ENCODE measurements at regions of chr15 and their contacts with region 1.

Region 1: GRCh38 chr15:94163999-94164807 is 67.2 kb upstream of the MCTP2 start:
- DNase-seq: peak; percentile 74
- ATAC-seq: peak; percentile 58
- H3K4me3 ChIP-seq: no peak overlapping the region
- H3K4me3 Mint-ChIP-seq: no peak overlapping the region
- H3K27ac ChIP-seq: no peak overlapping the region
- H3K27ac Mint-ChIP-seq: no peak overlapping the region
- H3K4me1 ChIP-seq: no peaks in the 10 kb centered on the region
- H3K4me1 Mint-ChIP-seq: peaks cover 1% of the 10 kb centered on the region
- H3K27me3 ChIP-seq: peaks cover 0 to 11% (median 0%) of the 10 kb centered on the region in 4 experiments
- H3K27me3 Mint-ChIP-seq: no peaks in the 10 kb centered on the region
- CTCF ChIP-seq: peak; percentile 98

Region 2: GRCh38 chr15:94174399-94174802 is 10.2 kb after region 1 on chr15:
- CTCF ChIA-PET with region 1: interaction called, 23 read pairs
- POLR2A ChIA-PET with region 1: no interaction called
- intact Hi-C with region 1: no loop called
- DNase-seq: peak; percentile 66
- ATAC-seq: peak; percentile 91
- H3K4me3 ChIP-seq: no peak overlapping the region
- H3K4me3 Mint-ChIP-seq: peak overlapping the region; percentile 48
- H3K27ac ChIP-seq: no peak overlapping the region
- H3K27ac Mint-ChIP-seq: peak overlapping the region; percentile 3
- H3K4me1 ChIP-seq: peaks cover 19 to 22% of the 10 kb centered on the region in 2 donors
- H3K4me1 Mint-ChIP-seq: peaks cover 22% of the 10 kb centered on the region
- H3K27me3 ChIP-seq: peaks cover 0 to 14% (median 3%) of the 10 kb centered on the region in 4 experiments
- H3K27me3 Mint-ChIP-seq: peaks cover 43% of the 10 kb centered on the region
- CTCF ChIP-seq: no peak

Region 3: GRCh38 chr15:94230956-94231722 is 66.9 kb after region 1 on chr15 and contains the start of gene MCTP2:
- CTCF ChIA-PET with region 1: interaction called, 63 read pairs
- POLR2A ChIA-PET with region 1: no interaction called
- intact Hi-C with region 1: no loop called
- DNase-seq: peak; percentile 91
- ATAC-seq: peak; percentile 87
- H3K4me3 ChIP-seq: peak within 1 kb of the TSS; percentile 70 to 96 (median 80)
- H3K4me3 Mint-ChIP-seq: peak within 1 kb of the TSS; percentile 95
- H3K27ac ChIP-seq: peak within 1 kb of the TSS; percentile 88 to 90
- H3K27ac Mint-ChIP-seq: peak within 1 kb of the TSS; percentile 93
- H3K4me1 ChIP-seq: peaks cover 53 to 59% of the 10 kb centered on the region in 2 donors
- H3K4me1 Mint-ChIP-seq: peaks cover 68% of the 10 kb centered on the region
- H3K27me3 ChIP-seq: no peaks in the 10 kb centered on the region
- H3K27me3 Mint-ChIP-seq: no peaks in the 10 kb centered on the region
- CTCF ChIP-seq: peak; percentile 24
- total RNA-seq, gene MCTP2: 64.8 and 68.5 TPM in 2 replicates

Region 4: GRCh38 chr15:94287794-94288246 is 123.6 kb after region 1 on chr15:
- CTCF ChIA-PET with region 1: interaction called, 46 read pairs
- POLR2A ChIA-PET with region 1: no interaction called
- intact Hi-C with region 1: no loop called
- DNase-seq: peak; percentile 91
- ATAC-seq: peak; percentile 92
- H3K4me3 ChIP-seq: peak overlapping the region; percentile 2 to 56 (median 28)
- H3K4me3 Mint-ChIP-seq: peak overlapping the region; percentile 84
- H3K27ac ChIP-seq: peak overlapping the region; percentile 90 to 93
- H3K27ac Mint-ChIP-seq: peak overlapping the region; percentile 90
- H3K4me1 ChIP-seq: peaks cover 65 to 72% of the 10 kb centered on the region in 2 donors
- H3K4me1 Mint-ChIP-seq: peaks cover 72% of the 10 kb centered on the region
- H3K27me3 ChIP-seq: no peaks in the 10 kb centered on the region
- H3K27me3 Mint-ChIP-seq: no peaks in the 10 kb centered on the region
- CTCF ChIP-seq: no peak

Region 5: GRCh38 chr15:94317201-94317600 is 153.0 kb after region 1 on chr15:
- CTCF ChIA-PET with region 1: interaction called, 511 read pairs
- POLR2A ChIA-PET with region 1: no interaction called
- intact Hi-C with region 1: no loop called
- DNase-seq: no peak
- ATAC-seq: no peak
- H3K4me3 ChIP-seq: no peak overlapping the region
- H3K4me3 Mint-ChIP-seq: no peak overlapping the region
- H3K27ac ChIP-seq: no peak overlapping the region
- H3K27ac Mint-ChIP-seq: no peak overlapping the region
- H3K4me1 ChIP-seq: no peaks in the 10 kb centered on the region
- H3K4me1 Mint-ChIP-seq: no peaks in the 10 kb centered on the region
- H3K27me3 ChIP-seq: no peaks in the 10 kb centered on the region
- H3K27me3 Mint-ChIP-seq: no peaks in the 10 kb centered on the region
- CTCF ChIP-seq: no peak

Region 6: GRCh38 chr15:94338243-94338846 is 174.1 kb after region 1 on chr15:
- CTCF ChIA-PET with region 1: interaction called, 32 read pairs
- POLR2A ChIA-PET with region 1: no interaction called
- intact Hi-C with region 1: no loop called
- DNase-seq: no peak
- ATAC-seq: no peak
- H3K4me3 ChIP-seq: no peak overlapping the region
- H3K4me3 Mint-ChIP-seq: no peak overlapping the region
- H3K27ac ChIP-seq: no peak overlapping the region
- H3K27ac Mint-ChIP-seq: no peak overlapping the region
- H3K4me1 ChIP-seq: no peaks in the 10 kb centered on the region
- H3K4me1 Mint-ChIP-seq: no peaks in the 10 kb centered on the region
- H3K27me3 ChIP-seq: no peaks in the 10 kb centered on the region
- H3K27me3 Mint-ChIP-seq: no peaks in the 10 kb centered on the region
- CTCF ChIP-seq: no peak

Region 7: GRCh38 chr15:94387849-94388441 is 223.7 kb after region 1 on chr15:
- CTCF ChIA-PET with region 1: interaction called, 13 read pairs
- POLR2A ChIA-PET with region 1: no interaction called
- intact Hi-C with region 1: no loop called
- DNase-seq: peak; percentile 67
- ATAC-seq: peak; percentile 64
- H3K4me3 ChIP-seq: peak overlapping the region in 1 of 5 experiments; percentile 1
- H3K4me3 Mint-ChIP-seq: peak overlapping the region; percentile 69
- H3K27ac ChIP-seq: peak overlapping the region; percentile 30 to 36
- H3K27ac Mint-ChIP-seq: peak overlapping the region; percentile 63
- H3K4me1 ChIP-seq: peaks cover 36% of the 10 kb centered on the region in 2 donors
- H3K4me1 Mint-ChIP-seq: peaks cover 43% of the 10 kb centered on the region
- H3K27me3 ChIP-seq: no peaks in the 10 kb centered on the region
- H3K27me3 Mint-ChIP-seq: no peaks in the 10 kb centered on the region
- CTCF ChIP-seq: no peak